ENCODE measurements at regions of chr5 and their contacts with region 1.

Region 1: GRCh38 chr5:14727428-14727865 is 62.9 kb downstream of the OTULIN start:
- DNase-seq: peak; percentile 60 to 76
- ATAC-seq: peak; percentile 82 to 91
- H3K4me3 ChIP-seq: no peak overlapping the region
- H3K27ac ChIP-seq: no peak overlapping the region
- H3K4me1 ChIP-seq: no peaks in the 10 kb centered on the region
- CTCF ChIP-seq: peak; percentile 95
- EP300 ChIP-seq: no peak
- POLR2A ChIP-seq: no peak
- RAD21 ChIP-seq: peak; percentile 97 to 98

Region 2: GRCh38 chr5:14212838-14213237 is 514.6 kb before region 1 on chr5:
- CTCF ChIA-PET with region 1: no interaction called
- POLR2A ChIA-PET with region 1: no interaction called
- DNase-seq: peak in 1 of 2 experiments; percentile 43
- ATAC-seq: no peak; a peak in 1 of 6 replicates
- H3K4me3 ChIP-seq: no peak overlapping the region
- H3K27ac ChIP-seq: peak overlapping the region; percentile 46 to 69; a peak in 5 of 6 replicates
- H3K4me1 ChIP-seq: peaks cover 89% of the 10 kb centered on the region
- CTCF ChIP-seq: no peak
- EP300 ChIP-seq: no peak
- POLR2A ChIP-seq: no peak
- RAD21 ChIP-seq: no peak

Region 3: DNA sequence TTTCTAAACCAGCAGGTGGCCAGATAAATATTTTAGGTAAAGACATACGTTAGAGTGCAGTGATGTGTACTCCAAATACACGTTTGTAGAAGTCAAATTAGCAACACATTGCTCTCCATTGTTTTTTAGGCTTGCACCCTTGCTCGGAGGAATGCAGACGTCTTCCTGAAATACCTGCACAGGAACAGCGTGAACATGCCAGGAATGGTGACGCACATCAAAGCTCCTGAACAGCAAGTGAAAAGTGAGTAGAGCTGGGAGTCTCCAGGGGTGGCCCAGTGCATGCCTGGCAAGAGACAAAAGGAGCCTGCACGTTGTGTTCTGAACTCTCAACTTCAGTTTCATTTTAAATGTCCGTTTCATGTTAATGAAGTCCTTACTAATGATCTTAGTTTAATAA is 353.3 kb before region 1 on chr5:
- CTCF ChIA-PET with region 1: no interaction called
- POLR2A ChIA-PET with region 1: no interaction called
- DNase-seq: no peak
- ATAC-seq: no peak
- H3K4me3 ChIP-seq: no peak overlapping the region
- H3K27ac ChIP-seq: no peak overlapping the region
- H3K4me1 ChIP-seq: no peaks in the 10 kb centered on the region
- CTCF ChIP-seq: no peak
- EP300 ChIP-seq: no peak
- POLR2A ChIP-seq: no peak
- RAD21 ChIP-seq: no peak

Region 4: DNA sequence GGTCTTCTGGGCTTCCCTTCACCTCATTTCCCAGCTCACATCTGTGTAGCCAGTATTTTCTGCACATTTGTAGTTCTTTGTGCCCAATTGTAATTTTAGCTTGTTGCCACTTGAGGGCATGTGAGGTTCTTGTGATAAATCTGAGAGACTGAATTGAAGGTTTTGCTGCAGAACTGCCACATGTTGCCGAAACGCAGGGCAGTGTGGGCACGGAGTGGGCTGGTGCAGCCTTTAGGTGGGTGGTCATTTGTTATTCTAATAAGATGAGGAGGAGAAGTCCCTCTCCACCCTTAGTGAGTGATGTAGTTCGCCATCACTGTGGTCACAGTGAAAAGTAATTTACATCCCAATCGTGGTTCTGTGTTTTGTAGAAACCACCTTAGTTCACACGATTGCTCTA is 41.7 kb before region 1 on chr5:
- CTCF ChIA-PET with region 1: interaction called, 41 read pairs
- POLR2A ChIA-PET with region 1: no interaction called
- DNase-seq: peak; percentile 56 to 62
- ATAC-seq: peak; percentile 89 to 92
- H3K4me3 ChIP-seq: no peak overlapping the region
- H3K27ac ChIP-seq: no peak overlapping the region
- H3K4me1 ChIP-seq: 0 out of 3 replicates have a peak, but pooled peaks cover 3% of the 10 kb centered on the region
- CTCF ChIP-seq: peak; percentile 73
- EP300 ChIP-seq: no peak
- POLR2A ChIP-seq: no peak
- RAD21 ChIP-seq: peak; percentile 76 to 78

Region 5: GRCh38 chr5:14714706-14715105 is 12.7 kb before region 1 on chr5:
- CTCF ChIA-PET with region 1: interaction called, 56 read pairs
- POLR2A ChIA-PET with region 1: no interaction called
- DNase-seq: no peak
- ATAC-seq: peak in 1 of 2 experiments; percentile 42; a peak in 3 of 6 replicates
- H3K4me3 ChIP-seq: no peak overlapping the region
- H3K27ac ChIP-seq: no peak overlapping the region
- H3K4me1 ChIP-seq: no peaks in the 10 kb centered on the region
- CTCF ChIP-seq: no peak
- EP300 ChIP-seq: no peak
- POLR2A ChIP-seq: no peak
- RAD21 ChIP-seq: no peak

Region 6: GRCh38 chr5:14745753-14746152 is 18.3 kb after region 1 on chr5:
- CTCF ChIA-PET with region 1: interaction called, 25 read pairs
- POLR2A ChIA-PET with region 1: no interaction called
- DNase-seq: no peak
- ATAC-seq: no peak
- H3K4me3 ChIP-seq: no peak overlapping the region
- H3K27ac ChIP-seq: no peak overlapping the region
- H3K4me1 ChIP-seq: no peaks in the 10 kb centered on the region
- CTCF ChIP-seq: no peak
- EP300 ChIP-seq: no peak
- POLR2A ChIP-seq: no peak
- RAD21 ChIP-seq: no peak

Region 7: GRCh38 chr5:14781106-14781505 is 53.7 kb after region 1 on chr5:
- CTCF ChIA-PET with region 1: no interaction called
- POLR2A ChIA-PET with region 1: no interaction called
- DNase-seq: no peak
- ATAC-seq: no peak
- H3K4me3 ChIP-seq: no peak overlapping the region
- H3K27ac ChIP-seq: no peak overlapping the region
- H3K4me1 ChIP-seq: peaks cover 18% of the 10 kb centered on the region
- CTCF ChIP-seq: no peak
- EP300 ChIP-seq: no peak
- POLR2A ChIP-seq: no peak
- RAD21 ChIP-seq: no peak

Region 8: GRCh38 chr5:14932984-14933383 is 205.5 kb after region 1 on chr5:
- CTCF ChIA-PET with region 1: interaction called, 10 read pairs
- POLR2A ChIA-PET with region 1: no interaction called
- DNase-seq: no peak
- ATAC-seq: no peak
- H3K4me3 ChIP-seq: no peak overlapping the region
- H3K27ac ChIP-seq: no peak overlapping the region
- H3K4me1 ChIP-seq: no peaks in the 10 kb centered on the region
- CTCF ChIP-seq: no peak
- EP300 ChIP-seq: no peak
- POLR2A ChIP-seq: no peak
- RAD21 ChIP-seq: no peak

Region 9: GRCh38 chr5:15003511-15003920 is 276.1 kb after region 1 on chr5:
- CTCF ChIA-PET with region 1: interaction called, 144 read pairs
- POLR2A ChIA-PET with region 1: no interaction called
- DNase-seq: peak; percentile 71 to 79
- ATAC-seq: peak; percentile 92 to 93
- H3K4me3 ChIP-seq: no peak overlapping the region
- H3K27ac ChIP-seq: 0 out of 6 replicates have a peak overlapping the region, but pooled peaks of 1 of the 2 experiments have one; percentile 14
- H3K4me1 ChIP-seq: peaks cover 15% of the 10 kb centered on the region
- CTCF ChIP-seq: peak; percentile 89
- EP300 ChIP-seq: no peak
- POLR2A ChIP-seq: no peak
- RAD21 ChIP-seq: peak; percentile 93 to 94